Left ventricle myocardium inferior (tissue), 1 donor: ENCODE measurements at regions of chr19 and their contacts with region 1.

Region 1: GRCh38 chr19:35879770-35880317 is 11.5 kb downstream of the APLP1 start:
- DNase-seq: peak; percentile 92
- H3K4me3 ChIP-seq: no peak overlapping the region
- H3K27ac ChIP-seq: no peak overlapping the region
- H3K4me1 ChIP-seq: peaks cover 7% of the 10 kb centered on the region
- H3K27me3 ChIP-seq: peaks cover 11% of the 10 kb centered on the region
- CTCF ChIP-seq: no peak

Region 2: GRCh38 chr19:35740423-35741202 is 139.2 kb before region 1 on chr19:
- intact Hi-C with region 1: no loop called
- DNase-seq: peak; percentile 99
- H3K4me3 ChIP-seq: peak overlapping the region; percentile 82
- H3K27ac ChIP-seq: peak overlapping the region; percentile 89
- H3K4me1 ChIP-seq: peaks cover 39% of the 10 kb centered on the region
- H3K27me3 ChIP-seq: no peaks in the 10 kb centered on the region
- CTCF ChIP-seq: peak; percentile 20

Region 3: DNA sequence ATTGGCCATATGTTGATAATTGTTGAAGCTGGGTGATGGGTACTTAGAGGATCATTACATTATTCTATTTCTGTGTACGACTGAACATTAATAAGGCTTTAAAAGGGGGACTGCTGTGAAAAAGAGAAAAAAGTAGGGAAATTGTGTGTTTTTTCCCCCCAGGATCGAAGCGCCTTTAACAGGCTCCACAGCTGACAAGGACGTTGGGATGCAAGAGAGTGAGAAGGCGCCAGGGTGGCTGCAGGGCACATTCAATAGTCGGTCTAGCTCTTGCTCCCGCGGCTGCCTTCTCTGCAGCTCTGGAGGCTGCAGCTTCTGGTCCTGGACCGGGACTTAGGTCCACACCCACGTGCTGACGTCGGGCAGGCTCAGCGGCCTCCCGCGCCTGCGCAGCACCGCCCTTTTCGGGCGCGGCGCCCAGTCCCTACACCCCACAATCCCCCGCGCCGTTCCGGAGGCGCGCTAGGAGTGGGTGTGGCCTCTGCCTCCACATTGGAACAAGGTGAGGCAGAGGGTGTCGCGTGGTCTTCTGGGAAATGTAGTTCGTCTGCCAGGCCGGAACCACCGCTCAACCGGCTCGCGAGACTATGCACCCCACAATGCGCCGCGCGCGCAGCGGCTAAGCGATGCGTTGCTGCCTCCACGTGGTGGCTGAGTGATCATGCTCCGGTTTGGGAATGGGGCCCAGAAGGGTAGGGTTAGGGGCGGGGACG is 51.5 kb after region 1 on chr19:
- intact Hi-C with region 1: loop called (anchors 10 kb)
- DNase-seq: peak; percentile 99
- H3K4me3 ChIP-seq: peak overlapping the region; percentile 54
- H3K27ac ChIP-seq: peak overlapping the region; percentile 81
- H3K4me1 ChIP-seq: peaks cover 21% of the 10 kb centered on the region
- H3K27me3 ChIP-seq: peaks cover 10% of the 10 kb centered on the region
- CTCF ChIP-seq: peak; percentile 88